ENCODE measurements at regions of chr3 and their contacts with region 1.

Region 1: DNA sequence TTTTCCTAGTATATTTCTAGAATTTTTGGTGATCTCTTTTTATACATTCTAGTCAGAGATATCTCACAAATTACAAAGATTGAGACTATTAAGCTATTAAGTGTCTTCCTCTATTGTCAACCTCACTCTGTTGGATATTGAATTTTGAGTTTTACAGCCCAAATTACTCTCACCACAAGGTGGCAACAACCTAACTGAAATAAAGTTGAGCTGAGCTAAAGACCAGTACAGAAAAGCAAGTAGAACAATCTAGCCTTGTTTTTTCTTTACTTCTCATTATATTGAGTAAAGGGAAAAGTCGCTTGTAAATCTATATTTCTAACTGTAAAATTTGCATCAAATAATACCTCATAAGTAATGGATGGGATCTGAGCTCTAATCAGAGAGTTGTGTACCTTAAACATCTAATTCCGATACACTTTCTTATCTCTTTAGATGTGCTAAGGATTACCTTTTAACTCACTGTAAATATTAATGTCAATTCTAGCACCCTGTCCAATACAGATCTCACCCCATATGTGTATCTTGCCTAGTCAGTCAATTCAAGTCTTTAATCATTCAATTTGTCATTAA is 13.6 kb upstream of the COMMD2 start:
- DNase-seq: peak; percentile 28
- H3K4me3 Mint-ChIP-seq: no peak overlapping the region
- H3K27ac Mint-ChIP-seq: no peak overlapping the region
- H3K4me1 Mint-ChIP-seq: no peaks in the 10 kb centered on the region
- H3K27me3 Mint-ChIP-seq: no peaks in the 10 kb centered on the region
- CTCF ChIP-seq: peak; percentile 49

Region 2: DNA sequence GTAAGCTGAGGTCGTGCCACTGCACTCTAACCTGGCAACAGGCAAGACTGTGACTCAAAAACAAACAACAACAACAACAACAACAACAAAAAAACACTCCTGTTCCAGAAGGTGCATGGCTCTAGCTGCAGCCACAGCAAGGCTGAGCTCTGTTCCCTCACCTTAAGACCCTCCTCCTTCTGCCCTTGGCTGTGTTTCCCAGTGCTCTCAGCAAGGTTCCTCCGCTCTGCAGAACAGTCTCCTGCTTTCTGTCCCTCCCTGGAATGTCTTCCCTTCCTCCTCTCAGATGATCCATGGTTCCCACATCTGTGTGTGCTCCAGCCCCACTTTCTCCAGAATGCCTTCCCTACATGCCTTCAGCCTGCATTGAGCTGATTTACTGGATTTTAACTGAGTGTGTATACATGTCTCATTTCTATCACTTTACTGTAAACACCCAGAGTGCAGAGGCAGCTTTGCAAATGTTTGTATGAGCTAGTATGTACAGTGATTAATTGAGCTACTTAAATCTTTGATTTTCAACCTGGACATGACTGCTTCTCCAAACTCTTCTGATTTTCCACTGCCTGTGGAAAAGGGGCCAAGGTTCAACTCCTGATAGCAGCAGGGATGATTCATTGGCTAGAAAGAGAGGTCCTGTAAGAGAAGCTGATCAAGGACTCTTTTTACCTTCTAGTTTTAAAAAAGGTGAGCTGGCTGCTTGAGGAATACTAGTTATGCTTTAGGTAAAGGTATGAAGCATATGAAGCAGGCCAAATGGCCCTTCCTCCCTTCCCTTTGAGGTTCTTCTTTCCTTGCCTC is 11.8 kb after region 1 on chr3:
- CTCF ChIA-PET with region 1: interaction called, 16 read pairs
- intact Hi-C with region 1: no loop called
- DNase-seq: no peak
- H3K4me3 Mint-ChIP-seq: no peak overlapping the region
- H3K27ac Mint-ChIP-seq: no peak overlapping the region
- H3K4me1 Mint-ChIP-seq: no peaks in the 10 kb centered on the region
- H3K27me3 Mint-ChIP-seq: no peaks in the 10 kb centered on the region
- CTCF ChIP-seq: no peak

Measured in Calu3 (cell line).